Caco-2 (cell line): ENCODE measurements at regions of chr11 and their contacts with region 1.

Region 1: DNA sequence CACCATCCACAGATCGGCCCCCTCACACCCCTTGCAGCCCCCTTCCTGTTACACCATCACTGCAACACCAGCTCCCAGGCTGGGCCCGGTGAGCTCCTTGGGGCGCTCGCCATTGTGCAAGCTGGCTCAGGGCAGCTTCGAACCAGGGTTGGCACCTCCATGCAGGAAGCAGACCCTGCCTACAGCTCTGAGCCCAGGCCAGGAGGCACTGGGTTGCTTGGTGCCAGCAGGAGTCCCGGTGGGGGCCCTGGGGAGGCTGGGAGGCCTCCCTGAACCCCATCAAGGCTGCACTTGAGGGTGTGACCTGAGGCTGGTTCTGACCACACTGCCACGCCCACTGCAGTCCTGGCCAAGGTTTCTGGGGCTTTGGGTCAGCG is 417.1 kb downstream of the CTTN start:
- DNase-seq: no peak
- H3K4me3 ChIP-seq: no peak overlapping the region
- H3K4me3 Mint-ChIP-seq: no peak overlapping the region
- H3K27ac Mint-ChIP-seq: no peak overlapping the region
- H3K4me1 ChIP-seq: no peaks in the 10 kb centered on the region
- H3K4me1 Mint-ChIP-seq: no peaks in the 10 kb centered on the region
- H3K27me3 ChIP-seq: no peaks in the 10 kb centered on the region
- H3K27me3 Mint-ChIP-seq: no peaks in the 10 kb centered on the region
- CTCF ChIP-seq: no peak

Region 2: GRCh38 chr11:70834277-70834940 is 18.9 kb after region 1 on chr11:
- CTCF ChIA-PET with region 1: no interaction called
- POLR2A ChIA-PET with region 1: no interaction called
- intact Hi-C with region 1: no loop called
- DNase-seq: no peak
- H3K4me3 ChIP-seq: no peak overlapping the region
- H3K4me3 Mint-ChIP-seq: no peak overlapping the region
- H3K27ac Mint-ChIP-seq: no peak overlapping the region
- H3K4me1 ChIP-seq: no peaks in the 10 kb centered on the region
- H3K4me1 Mint-ChIP-seq: no peaks in the 10 kb centered on the region
- H3K27me3 ChIP-seq: no peaks in the 10 kb centered on the region
- H3K27me3 Mint-ChIP-seq: no peaks in the 10 kb centered on the region
- CTCF ChIP-seq: no peak

Region 3: GRCh38 chr11:70913715-70914231 is 98.3 kb after region 1 on chr11:
- CTCF ChIA-PET with region 1: no interaction called
- POLR2A ChIA-PET with region 1: no interaction called
- intact Hi-C with region 1: no loop called
- DNase-seq: no peak
- H3K4me3 ChIP-seq: no peak overlapping the region
- H3K4me3 Mint-ChIP-seq: no peak overlapping the region
- H3K27ac Mint-ChIP-seq: no peak overlapping the region
- H3K4me1 ChIP-seq: no peaks in the 10 kb centered on the region
- H3K4me1 Mint-ChIP-seq: no peaks in the 10 kb centered on the region
- H3K27me3 ChIP-seq: no peaks in the 10 kb centered on the region
- H3K27me3 Mint-ChIP-seq: no peaks in the 10 kb centered on the region
- CTCF ChIP-seq: no peak

Region 4: DNA sequence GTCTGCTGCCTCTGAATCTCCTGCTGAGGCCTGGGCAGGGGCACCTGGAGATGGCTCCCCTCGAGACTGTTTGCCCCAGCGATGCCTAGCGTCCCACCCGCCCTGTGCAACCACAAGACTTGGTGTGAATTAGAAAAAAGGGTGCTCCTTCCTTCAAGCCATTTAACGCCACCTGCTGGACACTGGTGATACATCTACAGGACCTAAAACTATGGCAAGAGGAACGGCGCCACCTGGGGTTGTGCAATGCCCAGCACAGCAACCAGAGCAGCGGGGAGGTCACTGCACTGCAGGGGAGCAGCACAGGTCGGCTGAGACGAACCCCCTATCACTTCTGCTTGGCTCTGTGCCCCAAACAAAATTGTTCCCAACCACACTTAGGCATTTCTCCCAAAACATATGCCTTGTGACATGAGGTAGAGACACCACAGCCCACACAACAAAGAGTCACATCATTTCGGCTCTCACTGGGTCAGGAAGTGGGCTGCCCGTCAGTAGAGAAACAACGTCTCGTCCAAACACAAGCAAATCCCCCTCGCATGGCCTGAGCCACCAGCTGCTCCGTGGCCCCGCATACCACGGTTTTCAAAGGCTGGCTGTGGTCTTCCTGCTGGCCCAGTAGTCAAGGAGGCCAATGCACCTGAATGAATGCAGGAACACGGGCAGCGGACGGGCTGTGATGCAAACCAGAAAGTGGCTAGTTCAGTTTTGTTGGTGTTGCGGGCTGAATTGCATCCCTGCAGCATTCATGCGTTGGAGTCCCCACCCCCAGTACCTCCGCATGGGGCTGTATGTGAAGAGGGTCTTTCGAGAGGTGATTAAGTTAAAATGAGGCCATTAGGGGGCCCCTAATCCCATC is 265.0 kb after region 1 on chr11:
- CTCF ChIA-PET with region 1: no interaction called
- POLR2A ChIA-PET with region 1: no interaction called
- intact Hi-C with region 1: loop called (anchors 2 kb)
- DNase-seq: peak; percentile 85 to 87
- H3K4me3 ChIP-seq: no peak overlapping the region
- H3K4me3 Mint-ChIP-seq: no peak overlapping the region
- H3K27ac Mint-ChIP-seq: no peak overlapping the region
- H3K4me1 ChIP-seq: no peaks in the 10 kb centered on the region
- H3K4me1 Mint-ChIP-seq: peaks cover 14% of the 10 kb centered on the region
- H3K27me3 ChIP-seq: no peaks in the 10 kb centered on the region
- H3K27me3 Mint-ChIP-seq: no peaks in the 10 kb centered on the region
- CTCF ChIP-seq: peak; percentile 95

Region 5: DNA sequence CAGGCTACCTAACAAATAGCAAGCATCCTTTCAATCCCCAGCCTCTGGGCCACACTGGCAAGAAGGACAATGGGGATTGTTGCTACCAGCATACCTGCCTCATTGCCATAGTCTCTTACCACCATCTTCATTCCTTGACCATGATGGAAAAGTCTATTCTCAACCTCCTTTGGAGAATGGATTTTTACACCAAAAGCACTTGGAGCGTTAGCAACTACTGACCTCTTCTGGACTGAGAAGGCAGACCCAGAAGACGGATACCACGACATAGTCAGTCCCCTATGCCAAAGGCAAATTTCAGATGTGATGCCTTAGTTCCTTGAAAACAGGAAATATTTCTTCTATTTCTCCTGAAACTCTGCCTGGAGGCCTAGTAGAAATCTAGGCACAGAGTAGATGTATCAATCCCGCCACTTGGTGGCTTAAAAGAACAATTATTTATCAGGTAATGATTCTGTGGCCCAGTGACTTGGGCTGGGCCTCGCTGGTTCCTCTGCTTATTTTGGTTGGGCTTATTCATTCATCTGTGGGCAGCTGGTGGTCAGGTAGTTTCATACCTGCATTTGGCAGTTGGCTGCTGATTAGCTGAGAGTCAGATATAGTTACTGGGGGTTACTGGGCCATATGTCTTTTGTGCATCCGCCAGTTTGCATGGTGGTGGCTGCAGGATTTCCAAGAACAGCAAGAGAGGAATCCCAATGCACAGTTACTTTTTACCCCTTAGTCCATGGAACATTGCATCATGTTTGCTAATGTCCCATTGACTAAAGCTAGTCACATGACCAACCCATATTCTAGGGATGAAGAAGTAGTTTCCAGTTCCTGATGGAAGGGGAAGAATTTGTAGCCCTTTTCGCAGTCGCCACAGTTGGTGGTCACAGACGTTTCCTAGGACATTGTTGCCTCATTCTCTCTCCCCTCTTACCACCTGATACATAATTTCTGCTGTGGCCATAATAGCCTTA is 557.5 kb after region 1 on chr11:
- CTCF ChIA-PET with region 1: no interaction called
- POLR2A ChIA-PET with region 1: no interaction called
- intact Hi-C with region 1: loop called (anchors 1 kb)
- DNase-seq: peak in 1 of 2 experiments; percentile 60
- H3K4me3 ChIP-seq: no peak overlapping the region
- H3K4me3 Mint-ChIP-seq: no peak overlapping the region
- H3K27ac Mint-ChIP-seq: no peak overlapping the region
- H3K4me1 ChIP-seq: no peaks in the 10 kb centered on the region
- H3K4me1 Mint-ChIP-seq: no peaks in the 10 kb centered on the region
- H3K27me3 ChIP-seq: no peaks in the 10 kb centered on the region
- H3K27me3 Mint-ChIP-seq: peaks cover 11% of the 10 kb centered on the region
- CTCF ChIP-seq: peak; percentile 74 to 90